HEK293 (cell line): ENCODE measurements at regions of chrX and their contacts with region 1.

Region 1: GRCh38 chrX:10119399-10119990 is 37.3 kb upstream of the CLCN4 start:
- H3K4me3 ChIP-seq: no peak overlapping the region
- H3K27ac ChIP-seq: no peak overlapping the region
- H3K4me1 ChIP-seq: no peaks in the 10 kb centered on the region
- CTCF ChIP-seq: peak; percentile 97

Region 2: DNA sequence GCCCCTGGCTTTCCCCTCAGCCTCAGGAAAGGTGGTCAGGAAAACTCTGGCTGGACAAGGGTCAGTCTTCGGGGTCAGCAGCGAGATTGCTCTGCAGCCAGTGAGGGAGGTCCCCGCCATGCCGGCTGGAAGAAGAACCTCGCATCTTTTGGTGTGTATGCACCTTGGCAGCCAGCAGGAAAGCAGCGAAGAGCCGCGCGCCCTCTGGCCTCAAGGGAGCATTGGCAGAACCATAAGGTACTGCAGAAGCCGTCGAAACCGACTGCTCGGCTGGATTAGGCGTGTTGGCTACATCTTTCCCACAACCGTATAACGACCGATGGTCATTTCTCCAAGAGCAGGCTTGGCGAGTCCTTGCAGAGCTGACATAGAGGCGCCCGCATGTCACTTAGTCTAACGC is 402.1 kb before region 1 on chrX:
- CTCF ChIA-PET with region 1: no interaction called
- POLR2A ChIA-PET with region 1: no interaction called
- H3K4me3 ChIP-seq: no peak overlapping the region
- H3K27ac ChIP-seq: no peak overlapping the region
- H3K4me1 ChIP-seq: no peaks in the 10 kb centered on the region
- CTCF ChIP-seq: no peak

Region 3: GRCh38 chrX:9995855-9996339 is 123.6 kb before region 1 on chrX:
- CTCF ChIA-PET with region 1: interaction called, 29 read pairs
- POLR2A ChIA-PET with region 1: no interaction called
- H3K4me3 ChIP-seq: no peak overlapping the region
- H3K27ac ChIP-seq: no peak overlapping the region
- H3K4me1 ChIP-seq: no peaks in the 10 kb centered on the region
- CTCF ChIP-seq: no peak

Region 4: DNA sequence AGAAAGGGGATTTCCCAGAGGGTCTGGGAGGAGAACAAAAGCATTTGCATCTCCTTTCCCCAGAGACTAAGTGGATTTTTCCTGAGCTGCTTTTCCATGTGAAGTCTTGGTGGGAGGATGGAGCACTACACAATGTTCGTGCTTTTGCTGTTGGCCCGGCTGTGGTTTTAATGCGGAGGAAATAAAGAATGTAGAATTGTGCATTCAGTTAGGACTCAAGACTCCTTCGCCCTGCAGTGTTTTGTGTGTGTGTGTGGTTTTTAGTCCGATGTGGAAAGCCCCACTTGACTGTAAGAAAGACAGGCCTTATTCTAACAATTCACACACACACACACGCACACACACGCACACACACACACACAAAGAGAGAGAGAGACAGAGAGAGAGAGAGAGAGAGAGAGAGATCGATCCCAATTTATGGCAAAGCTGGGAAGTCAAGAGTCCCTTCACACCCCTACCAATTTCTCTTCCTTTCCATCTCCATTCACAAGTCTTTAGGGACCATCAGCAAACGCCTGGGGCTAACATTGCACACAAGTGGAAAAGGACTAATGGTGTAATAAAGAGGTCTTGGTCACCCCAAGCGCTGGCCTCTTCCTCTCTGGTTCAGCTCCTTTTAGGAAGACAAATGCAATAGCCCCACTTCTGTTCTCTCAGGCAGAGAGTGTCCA is 108.1 kb before region 1 on chrX:
- CTCF ChIA-PET with region 1: interaction called, 10 read pairs
- POLR2A ChIA-PET with region 1: no interaction called
- H3K4me3 ChIP-seq: no peak overlapping the region
- H3K27ac ChIP-seq: peak overlapping the region; percentile 37; the same call in 1 of the 2 replicates
- H3K4me1 ChIP-seq: no peaks in the 10 kb centered on the region
- CTCF ChIP-seq: no peak

Region 5: GRCh38 chrX:10106806-10107205 is 12.7 kb before region 1 on chrX:
- CTCF ChIA-PET with region 1: interaction called, 14 read pairs
- POLR2A ChIA-PET with region 1: no interaction called
- H3K4me3 ChIP-seq: no peak overlapping the region
- H3K27ac ChIP-seq: no peak overlapping the region
- H3K4me1 ChIP-seq: no peaks in the 10 kb centered on the region
- CTCF ChIP-seq: no peak

Region 6: DNA sequence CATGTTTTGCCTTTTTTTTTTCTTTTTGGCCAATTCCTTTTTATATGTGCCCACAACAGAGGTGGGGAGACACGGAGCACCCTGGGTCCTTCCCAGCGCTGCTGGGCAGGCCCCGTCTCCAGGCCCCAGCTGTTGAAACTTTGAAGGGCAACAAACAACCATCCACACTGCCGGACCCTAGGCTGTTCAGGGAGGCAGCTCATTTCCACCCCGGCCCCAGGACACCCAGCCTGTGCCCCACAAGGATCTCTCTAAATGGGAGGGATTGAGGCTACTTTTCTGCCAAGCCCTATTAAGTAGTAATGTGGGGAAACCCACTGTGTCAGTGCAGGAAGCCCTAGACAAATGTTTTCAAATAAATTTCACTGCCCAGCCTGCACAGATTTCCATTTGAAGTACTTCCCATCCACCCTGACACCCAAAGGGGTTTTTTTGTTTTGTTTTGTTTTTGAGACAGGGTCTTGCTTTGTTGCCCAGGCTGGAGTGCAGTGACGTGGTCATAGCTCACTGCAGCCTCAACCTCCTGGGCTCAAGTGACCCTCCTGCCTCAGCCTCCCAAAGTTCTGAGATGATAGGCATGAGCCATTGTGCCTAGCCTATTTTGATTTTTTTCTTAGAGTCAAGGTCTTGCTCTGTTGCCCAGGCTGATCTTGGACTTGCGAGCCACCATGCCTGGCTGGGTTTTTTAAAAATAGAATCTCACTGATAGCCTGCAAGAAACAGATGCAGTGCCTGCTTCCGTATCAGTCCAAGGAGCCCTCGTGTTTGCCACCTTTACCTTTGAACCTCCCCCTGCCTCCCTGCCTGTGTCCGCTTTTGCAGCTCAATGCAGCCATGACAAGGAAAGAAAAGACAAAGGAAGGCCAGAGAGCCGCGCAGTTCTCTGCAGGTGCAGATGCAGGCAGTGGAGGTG is 23.8 kb after region 1 on chrX:
- CTCF ChIA-PET with region 1: interaction called, 11 read pairs
- POLR2A ChIA-PET with region 1: no interaction called
- H3K4me3 ChIP-seq: no peak overlapping the region
- H3K27ac ChIP-seq: no peak overlapping the region
- H3K4me1 ChIP-seq: no peaks in the 10 kb centered on the region
- CTCF ChIP-seq: no peak